ENCODE measurements at regions of chr9 and their contacts with region 1.

Region 1: DNA sequence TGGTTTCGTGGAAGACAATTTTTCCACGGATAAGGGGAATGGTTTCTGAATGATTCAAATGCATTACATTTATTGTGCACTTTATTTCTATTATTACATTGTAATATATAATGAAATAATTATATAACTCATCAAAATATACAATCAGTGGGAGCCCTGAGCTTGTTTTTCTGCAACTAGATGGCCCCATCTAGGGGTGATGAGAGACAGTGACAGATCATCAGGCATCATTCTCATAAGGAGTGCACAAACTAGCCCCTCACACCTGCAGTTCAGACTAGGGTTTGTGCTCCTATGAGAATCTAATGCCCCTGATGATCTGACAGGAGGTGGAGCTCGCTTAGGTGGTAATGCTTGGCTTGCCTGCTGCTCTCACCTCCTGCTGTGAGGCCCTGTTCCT is 6.4 kb downstream of the ISCA1 start:
- DNase-seq: no peak
- H3K4me3 ChIP-seq: no peak overlapping the region
- H3K27me3 ChIP-seq: no peaks in the 10 kb centered on the region
- CTCF ChIP-seq: no peak

Region 2: GRCh38 chr9:86262452-86262851 is 13.5 kb before region 1 on chr9:
- CTCF ChIA-PET with region 1: interaction called, 13 read pairs
- POLR2A ChIA-PET with region 1: no interaction called
- DNase-seq: no peak
- H3K4me3 ChIP-seq: no peak overlapping the region
- H3K27me3 ChIP-seq: no peaks in the 10 kb centered on the region
- CTCF ChIP-seq: no peak

Measured in BJ (cell line).